GM10248 (cell line): ENCODE measurements at regions of chr20 and their contacts with region 1.

Region 1: DNA sequence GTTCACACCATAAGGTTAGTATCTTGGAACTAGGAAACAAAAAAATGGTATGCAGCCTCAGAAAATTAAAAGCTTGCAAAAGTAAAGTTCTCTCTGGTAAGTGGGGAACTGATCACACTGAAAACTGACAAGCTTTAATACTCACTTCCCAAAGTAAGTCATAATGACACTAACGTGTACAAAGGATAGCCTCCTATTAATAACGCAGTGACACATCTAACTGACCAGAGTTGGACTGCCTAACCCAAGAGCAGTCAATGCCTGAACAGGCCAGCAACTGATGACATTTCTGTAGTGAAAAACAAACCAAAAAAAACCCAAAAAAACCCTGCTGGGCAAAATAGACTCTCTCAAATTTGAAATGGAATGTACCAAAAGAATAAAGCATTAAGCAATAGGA is 30.7 kb downstream of the CHD6 start:
- DNase-seq: no peak
- CTCF ChIP-seq: no peak

Region 2: DNA sequence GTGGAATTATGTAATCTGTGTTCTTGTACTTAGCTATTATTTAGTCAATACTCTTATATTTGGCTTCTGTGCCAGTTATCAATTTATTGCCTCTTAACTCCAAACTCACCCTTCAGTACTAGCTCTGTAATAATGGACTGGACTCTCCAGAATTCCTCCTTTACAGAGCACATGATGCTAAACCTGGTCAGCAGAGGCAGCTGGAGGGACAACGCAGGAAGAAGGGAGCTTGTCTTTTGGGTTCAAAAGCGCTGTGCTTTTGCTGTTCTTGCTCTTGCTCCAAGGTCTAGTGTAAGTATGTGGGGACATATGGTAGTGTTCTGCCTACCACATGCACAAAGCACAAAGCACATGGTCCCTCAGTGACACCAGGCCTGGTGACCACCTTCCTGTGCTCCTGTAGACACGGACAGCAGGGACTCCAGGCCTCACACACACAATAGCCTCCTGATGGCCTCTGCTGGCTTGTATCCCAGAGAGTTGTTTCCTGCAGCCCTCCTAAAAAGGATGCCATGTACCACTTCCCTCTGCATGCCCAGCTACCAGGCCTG is 15.4 kb before region 1 on chr20:
- CTCF ChIA-PET with region 1: interaction called, 10 read pairs
- POLR2A ChIA-PET with region 1: no interaction called
- DNase-seq: no peak
- CTCF ChIP-seq: peak; percentile 11

Region 3: GRCh38 chr20:41604010-41604409 is 16.5 kb after region 1 on chr20:
- CTCF ChIA-PET with region 1: no interaction called
- POLR2A ChIA-PET with region 1: no interaction called
- DNase-seq: no peak
- CTCF ChIP-seq: no peak